HEK293 (cell line): ENCODE measurements at regions of chr1 and their contacts with region 1.

Region 1: DNA sequence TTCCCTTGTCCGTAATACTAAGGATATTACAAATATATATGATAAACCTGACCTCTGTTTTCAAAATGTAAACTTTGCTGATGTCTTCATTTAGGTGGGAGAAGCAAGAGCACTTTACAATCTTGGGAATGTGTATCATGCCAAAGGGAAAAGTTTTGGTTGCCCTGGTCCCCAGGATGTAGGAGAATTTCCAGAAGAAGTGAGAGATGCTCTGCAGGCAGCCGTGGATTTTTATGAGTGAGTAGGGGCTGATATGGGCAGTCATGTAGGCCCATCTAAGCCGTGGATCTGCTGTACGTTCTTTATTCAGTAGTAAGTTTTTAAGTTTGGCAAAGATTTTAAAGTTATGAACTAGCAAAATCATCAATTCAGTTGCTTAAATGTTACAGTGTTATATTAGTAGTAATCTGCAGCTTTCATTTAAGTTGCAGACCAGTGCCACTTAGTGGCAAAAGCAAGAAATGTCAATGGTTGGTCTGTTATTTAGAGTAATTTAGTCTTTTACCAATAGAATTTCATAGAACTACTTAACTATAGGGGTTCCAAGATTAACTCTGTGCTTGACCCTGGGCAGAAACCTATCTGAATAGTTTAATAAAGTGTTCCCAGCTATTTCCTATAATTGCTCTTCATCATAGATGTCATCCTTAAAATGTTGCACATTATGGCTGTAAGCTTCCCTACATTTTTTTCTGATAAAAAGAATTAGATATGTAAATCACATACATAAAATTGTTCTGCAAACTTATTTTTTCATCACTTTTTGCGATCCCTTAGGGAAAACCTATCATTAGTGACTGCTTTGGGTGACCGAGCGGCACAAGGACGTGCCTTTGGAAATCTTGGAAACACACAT is 21.3 kb downstream of the GPSM2 start:
- H3K4me3 ChIP-seq: no peak overlapping the region
- H3K27ac ChIP-seq: no peak overlapping the region
- H3K4me1 ChIP-seq: no peaks in the 10 kb centered on the region
- CTCF ChIP-seq: peak; percentile 48; the same call in 1 of the 2 replicates

Region 2: GRCh38 chr1:108882837-108883236 is 15.3 kb before region 1 on chr1:
- CTCF ChIA-PET with region 1: interaction called, 10 read pairs
- POLR2A ChIA-PET with region 1: no interaction called
- H3K4me3 ChIP-seq: no peak overlapping the region
- H3K27ac ChIP-seq: no peak overlapping the region
- H3K4me1 ChIP-seq: no peaks in the 10 kb centered on the region; the same call in none of the 2 replicates
- CTCF ChIP-seq: no peak

Region 3: GRCh38 chr1:109133815-109134214 is 235.7 kb after region 1 on chr1:
- CTCF ChIA-PET with region 1: no interaction called
- POLR2A ChIA-PET with region 1: no interaction called
- H3K4me3 ChIP-seq: no peak overlapping the region
- H3K27ac ChIP-seq: no peak overlapping the region
- H3K4me1 ChIP-seq: no peaks in the 10 kb centered on the region
- CTCF ChIP-seq: no peak

Region 4: GRCh38 chr1:109201123-109201703 is 303.1 kb after region 1 on chr1:
- CTCF ChIA-PET with region 1: no interaction called
- POLR2A ChIA-PET with region 1: no interaction called
- H3K4me3 ChIP-seq: no peak overlapping the region
- H3K27ac ChIP-seq: no peak overlapping the region
- H3K4me1 ChIP-seq: no peaks in the 10 kb centered on the region
- CTCF ChIP-seq: no peak; the same call in 1 of the 2 replicates

Region 5: GRCh38 chr1:109412551-109412950 is 514.5 kb after region 1 on chr1:
- CTCF ChIA-PET with region 1: no interaction called
- POLR2A ChIA-PET with region 1: no interaction called
- H3K4me3 ChIP-seq: no peak overlapping the region
- H3K27ac ChIP-seq: no peak overlapping the region
- H3K4me1 ChIP-seq: no peaks in the 10 kb centered on the region
- CTCF ChIP-seq: no peak